Dendritic cell treated with granulocyte-macrophage colony-stimulating factor and Interleukin-4, amounts not matched to agents 40 ng/mL and 50 ng/mL, for 4 days (primary cell): ENCODE measurements at regions of chr19 and their contacts with region 1.

Region 1: DNA sequence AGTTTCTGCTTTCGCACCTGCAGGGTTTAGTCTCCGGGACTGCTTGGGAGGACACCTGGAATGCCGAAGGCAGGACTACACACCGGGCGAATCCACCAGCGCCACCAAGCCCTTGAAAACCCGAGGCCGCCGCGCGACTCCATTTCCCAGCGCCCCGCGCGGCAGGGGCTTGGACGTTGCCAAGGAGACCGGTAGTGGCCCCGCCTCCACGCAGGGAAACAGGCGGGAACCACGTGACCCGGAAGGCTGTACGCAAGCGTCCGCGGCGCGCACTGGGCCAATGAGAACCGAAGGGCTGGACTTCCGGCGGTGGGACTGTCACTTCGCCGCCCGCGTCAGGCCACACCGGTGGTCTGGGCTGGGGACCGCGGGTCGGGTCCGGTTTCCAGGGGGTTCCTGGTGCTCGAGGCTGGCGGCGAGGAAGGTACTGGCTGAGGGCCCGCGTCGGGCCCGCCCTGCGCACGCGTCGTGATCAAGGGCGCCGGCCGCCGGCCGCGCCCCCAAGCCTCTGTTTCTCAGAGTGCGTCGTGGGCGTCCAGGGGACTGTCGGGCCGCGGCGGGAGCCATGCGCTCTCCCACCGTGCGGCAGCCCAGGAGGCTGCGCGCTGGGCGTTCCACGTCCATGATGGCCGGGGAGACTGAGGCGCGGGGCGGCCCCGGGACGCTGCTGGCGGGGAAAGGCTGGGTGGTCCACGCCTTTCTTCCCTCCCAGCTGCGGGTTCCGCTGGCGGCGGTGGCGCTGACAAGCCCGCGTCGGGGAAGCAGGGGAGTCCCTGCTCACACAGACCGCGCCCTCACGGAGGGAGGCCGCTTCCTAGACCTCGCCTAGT is at the start of gene ZNF324:
- H3K4me3 Mint-ChIP-seq: peak within 1 kb of the TSS; percentile 76
- H3K27ac Mint-ChIP-seq: peak within 1 kb of the TSS; percentile 76
- H3K4me1 Mint-ChIP-seq: peaks cover 26% of the 10 kb centered on the region
- H3K27me3 Mint-ChIP-seq: no peaks in the 10 kb centered on the region

Region 2: GRCh38 chr19:58338825-58339558 is 128.0 kb before region 1 on chr19:
- intact Hi-C with region 1: no loop called
- H3K4me3 Mint-ChIP-seq: no peak overlapping the region
- H3K27ac Mint-ChIP-seq: no peak overlapping the region
- H3K4me1 Mint-ChIP-seq: peaks cover 14% of the 10 kb centered on the region
- H3K27me3 Mint-ChIP-seq: no peaks in the 10 kb centered on the region

Region 3: GRCh38 chr19:58408152-58409009 is 58.6 kb before region 1 on chr19 and contains the start of gene ZNF584:
- intact Hi-C with region 1: loop called (anchors 1 kb)
- H3K4me3 Mint-ChIP-seq: peak within 1 kb of the TSS; percentile 96
- H3K27ac Mint-ChIP-seq: peak within 1 kb of the TSS; percentile 88
- H3K4me1 Mint-ChIP-seq: peaks cover 40% of the 10 kb centered on the region
- H3K27me3 Mint-ChIP-seq: no peaks in the 10 kb centered on the region

Region 4: DNA sequence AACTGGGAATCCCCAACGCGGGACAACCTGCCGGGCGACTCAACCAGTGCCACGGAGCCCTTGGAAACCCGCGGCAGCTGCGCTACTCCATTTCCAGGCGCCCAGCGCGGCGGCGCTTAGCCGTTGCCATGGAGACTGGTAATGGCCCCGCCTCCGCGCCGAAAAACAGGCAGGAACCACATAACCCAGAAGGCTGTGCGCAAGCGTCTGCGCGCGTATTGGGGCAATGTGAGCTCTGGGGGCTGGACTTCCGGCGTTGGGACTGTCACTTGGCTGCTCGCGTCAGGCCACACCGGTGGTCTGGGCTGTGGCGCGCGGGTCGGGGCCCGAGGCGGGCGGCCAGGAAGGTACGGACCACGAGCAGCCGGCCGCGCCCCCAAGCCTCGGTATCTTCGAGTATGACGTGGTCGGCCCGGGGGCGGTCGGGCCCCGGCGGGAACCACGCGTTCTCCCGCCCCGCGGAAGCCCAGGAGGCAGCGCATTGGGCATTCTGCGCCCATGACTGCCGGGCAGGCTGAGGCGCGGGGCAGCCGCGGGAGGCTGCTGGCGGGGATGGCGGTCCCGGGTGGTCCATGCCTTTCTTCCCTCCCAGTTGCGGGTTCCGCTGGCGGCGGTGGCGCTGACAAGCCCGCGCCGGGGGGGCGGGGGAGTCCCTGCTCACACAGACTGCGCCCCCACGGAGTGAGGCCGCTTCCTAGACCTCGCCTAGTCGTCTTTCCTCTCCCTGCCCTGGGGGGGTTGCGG is 15.4 kb before region 1 on chr19 and contains the start of gene ZNF324B:
- intact Hi-C with region 1: loop called (anchors 2 kb)
- H3K4me3 Mint-ChIP-seq: peak within 1 kb of the TSS; percentile 85
- H3K27ac Mint-ChIP-seq: peak within 1 kb of the TSS; percentile 77
- H3K4me1 Mint-ChIP-seq: peaks cover 28% of the 10 kb centered on the region
- H3K27me3 Mint-ChIP-seq: peaks cover 19% of the 10 kb centered on the region

Region 5: DNA sequence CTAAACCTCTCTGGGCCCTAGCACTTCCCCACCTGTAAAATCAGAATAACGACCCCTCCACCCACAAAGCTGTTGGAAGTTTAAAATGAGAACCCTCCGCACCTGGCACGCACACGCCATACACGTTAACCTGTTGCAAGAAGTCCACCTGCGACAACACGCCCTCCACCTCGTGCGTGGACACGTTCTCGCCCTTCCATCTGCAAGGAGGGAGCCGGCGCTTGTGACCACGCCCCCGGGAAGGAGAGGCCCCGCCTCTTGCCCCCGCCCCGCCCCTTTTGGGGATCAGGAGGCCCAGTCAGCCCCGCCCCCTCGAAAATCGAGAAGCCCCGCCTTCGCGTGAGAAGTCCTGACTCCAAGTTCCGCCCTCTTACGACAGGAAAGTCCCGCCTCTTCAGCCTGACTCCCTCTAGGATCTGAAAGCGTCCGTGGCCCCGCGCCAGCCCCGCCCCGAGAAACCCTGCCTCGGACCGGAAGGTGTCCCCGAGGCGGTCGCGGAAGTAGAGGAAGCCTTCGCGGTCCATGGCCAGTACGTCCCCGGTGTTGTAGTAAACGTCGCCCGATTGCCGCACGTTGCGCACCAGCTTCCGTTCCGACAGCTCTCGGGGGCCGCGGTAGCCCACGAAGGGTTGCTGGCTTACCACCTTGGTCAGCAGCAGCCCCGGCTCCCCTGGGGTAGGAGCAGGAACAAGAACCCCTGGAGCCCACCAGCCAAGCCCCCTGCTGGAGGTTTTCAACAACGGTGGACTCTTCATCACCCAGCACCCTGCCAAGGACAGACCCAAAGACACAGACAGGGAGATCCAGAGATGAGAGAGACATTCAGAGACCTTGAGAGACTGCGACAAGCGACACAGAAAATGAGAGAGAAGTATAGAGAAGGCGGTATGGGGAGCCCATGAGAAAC is 32.3 kb after region 1 on chr19:
- intact Hi-C with region 1: loop called (anchors 1 kb)
- H3K4me3 Mint-ChIP-seq: peak overlapping the region; percentile 79
- H3K27ac Mint-ChIP-seq: peak overlapping the region; percentile 89
- H3K4me1 Mint-ChIP-seq: peaks cover 18% of the 10 kb centered on the region
- H3K27me3 Mint-ChIP-seq: peaks cover 15% of the 10 kb centered on the region

Region 6: GRCh38 chr19:58513694-58514563 is 47.0 kb after region 1 on chr19:
- intact Hi-C with region 1: no loop called
- H3K4me3 Mint-ChIP-seq: peak overlapping the region; percentile 75
- H3K27ac Mint-ChIP-seq: peak overlapping the region; percentile 82
- H3K4me1 Mint-ChIP-seq: peaks cover 52% of the 10 kb centered on the region
- H3K27me3 Mint-ChIP-seq: no peaks in the 10 kb centered on the region